Colonic mucosa (tissue), 4 donors: ENCODE measurements at regions of chr10 and their contacts with region 1.

Region 1: GRCh38 chr10:128069351-128070051 is 56.7 kb downstream of the MKI67 start:
- DNase-seq: peak; percentile 64
- H3K4me3 ChIP-seq: no peak overlapping the region
- H3K27ac ChIP-seq: no peak overlapping the region
- H3K4me1 ChIP-seq: no peaks in the 10 kb centered on the region
- H3K27me3 ChIP-seq: no peaks in the 10 kb centered on the region
- CTCF ChIP-seq: peak; percentile 71

Region 2: DNA sequence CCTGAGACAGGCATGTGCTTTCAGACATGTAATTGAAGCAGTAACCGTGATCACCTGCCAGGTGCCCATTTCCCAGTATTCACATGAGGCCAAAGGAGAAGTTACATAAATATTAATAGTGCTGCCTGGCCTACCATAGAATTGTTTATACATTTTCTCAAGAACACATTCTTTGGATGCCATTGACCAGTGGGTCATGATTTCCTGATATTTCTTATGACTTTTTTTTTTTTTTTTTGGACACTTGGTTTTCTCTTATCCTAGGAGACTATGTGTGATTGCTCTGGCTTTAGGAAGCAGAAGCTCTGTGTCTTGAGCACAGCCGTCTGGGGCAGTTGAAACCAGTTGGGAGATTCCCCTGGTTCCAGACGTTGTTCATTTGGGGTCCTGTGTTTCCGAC is 664.3 kb before region 1 on chr10:
- intact Hi-C with region 1: no loop called
- DNase-seq: no peak
- H3K4me3 ChIP-seq: no peak overlapping the region
- H3K27ac ChIP-seq: no peak overlapping the region
- H3K4me1 ChIP-seq: no peaks in the 10 kb centered on the region
- H3K27me3 ChIP-seq: no peaks in the 10 kb centered on the region
- CTCF ChIP-seq: no peak

Region 3: DNA sequence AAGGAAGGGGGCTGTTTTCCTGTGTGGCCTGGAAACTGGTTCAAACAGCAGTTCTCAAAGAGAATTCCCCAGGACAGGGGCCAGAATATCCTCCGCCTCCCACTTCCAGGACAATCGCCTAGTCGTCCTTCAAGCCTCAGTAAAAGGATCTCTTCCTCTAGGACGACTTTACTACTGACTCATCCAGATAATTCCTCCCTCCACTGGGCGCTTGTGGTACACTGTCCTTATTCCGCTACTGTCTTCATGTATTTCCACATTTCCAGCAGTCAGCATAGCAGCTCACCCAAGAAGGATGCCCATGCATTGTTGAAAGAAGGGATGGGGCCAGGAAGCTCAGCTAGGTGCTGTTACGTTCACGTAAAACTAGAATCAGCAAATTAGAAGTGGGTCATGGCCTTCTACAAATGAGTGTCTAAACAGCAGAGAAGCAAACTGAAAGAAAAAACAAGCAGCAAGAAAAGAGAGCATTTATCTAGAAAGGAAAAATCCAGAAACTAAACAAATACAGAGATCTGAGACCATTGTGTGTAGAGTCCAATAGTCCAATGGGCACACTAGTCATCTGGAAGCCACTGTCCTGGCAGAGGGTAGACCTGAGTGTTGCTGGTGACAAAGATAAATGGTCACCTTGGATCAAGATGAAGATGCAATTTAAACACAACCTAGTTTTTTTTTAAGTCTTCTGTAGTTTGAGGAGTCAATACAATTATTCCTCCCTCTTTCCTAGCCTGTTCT is 203.1 kb before region 1 on chr10:
- intact Hi-C with region 1: loop called (anchors 5 kb)
- DNase-seq: no peak
- H3K4me3 ChIP-seq: no peak overlapping the region
- H3K27ac ChIP-seq: no peak overlapping the region
- H3K4me1 ChIP-seq: no peaks in the 10 kb centered on the region
- H3K27me3 ChIP-seq: no peaks in the 10 kb centered on the region
- CTCF ChIP-seq: no peak

Region 4: DNA sequence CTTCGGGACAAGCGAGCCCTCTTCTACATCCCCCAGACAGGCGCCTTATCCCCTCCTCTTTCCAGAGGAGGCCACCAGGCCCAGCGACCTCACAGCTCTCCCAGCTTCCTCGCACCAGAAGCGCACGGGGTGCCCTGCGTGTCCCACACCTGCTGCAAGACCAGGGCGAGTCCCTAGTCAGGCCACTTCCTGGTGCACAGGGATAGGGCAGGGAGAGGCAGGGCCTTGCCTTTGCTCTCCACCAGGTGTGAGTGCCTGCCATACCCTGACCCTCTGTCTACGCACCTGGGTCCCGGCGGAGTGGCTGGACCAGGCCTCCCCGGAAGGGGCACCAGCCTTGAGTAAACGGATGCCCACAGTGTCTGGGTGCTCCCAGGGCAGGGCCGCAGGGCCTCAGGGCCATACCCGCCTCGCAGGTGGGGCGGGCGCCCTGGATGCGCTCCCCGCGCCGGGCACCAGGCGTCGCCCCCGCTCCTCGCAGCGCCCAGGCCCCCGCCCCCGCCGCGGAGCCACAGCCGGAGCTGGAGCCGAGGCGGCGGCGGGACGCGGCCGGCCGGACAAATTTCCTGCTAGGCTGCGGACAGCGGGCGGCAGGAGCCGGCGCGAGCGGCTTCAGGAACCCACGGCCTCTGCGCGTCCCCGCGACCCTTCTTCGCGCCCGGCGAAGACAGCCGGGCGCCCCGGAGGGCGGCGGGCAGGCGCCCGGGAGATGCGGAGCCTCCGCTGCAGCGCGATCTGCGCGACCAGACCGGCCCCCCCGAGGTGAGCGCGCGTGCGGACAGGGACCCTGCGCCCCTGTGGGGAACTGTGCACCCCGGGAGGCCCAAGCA is 162.7 kb before region 1 on chr10 and contains the start of gene PTPRE:
- intact Hi-C with region 1: loop called (anchors 5 kb)
- DNase-seq: peak; percentile 79
- H3K4me3 ChIP-seq: peak within 1 kb of the TSS; percentile 75
- H3K27ac ChIP-seq: peak within 1 kb of the TSS; percentile 85
- H3K4me1 ChIP-seq: peaks cover 8% of the 10 kb centered on the region
- H3K27me3 ChIP-seq: no peaks in the 10 kb centered on the region
- CTCF ChIP-seq: peak; percentile 57
- total RNA-seq, gene PTPRE: 15.9 to 18.8 TPM

Region 5: DNA sequence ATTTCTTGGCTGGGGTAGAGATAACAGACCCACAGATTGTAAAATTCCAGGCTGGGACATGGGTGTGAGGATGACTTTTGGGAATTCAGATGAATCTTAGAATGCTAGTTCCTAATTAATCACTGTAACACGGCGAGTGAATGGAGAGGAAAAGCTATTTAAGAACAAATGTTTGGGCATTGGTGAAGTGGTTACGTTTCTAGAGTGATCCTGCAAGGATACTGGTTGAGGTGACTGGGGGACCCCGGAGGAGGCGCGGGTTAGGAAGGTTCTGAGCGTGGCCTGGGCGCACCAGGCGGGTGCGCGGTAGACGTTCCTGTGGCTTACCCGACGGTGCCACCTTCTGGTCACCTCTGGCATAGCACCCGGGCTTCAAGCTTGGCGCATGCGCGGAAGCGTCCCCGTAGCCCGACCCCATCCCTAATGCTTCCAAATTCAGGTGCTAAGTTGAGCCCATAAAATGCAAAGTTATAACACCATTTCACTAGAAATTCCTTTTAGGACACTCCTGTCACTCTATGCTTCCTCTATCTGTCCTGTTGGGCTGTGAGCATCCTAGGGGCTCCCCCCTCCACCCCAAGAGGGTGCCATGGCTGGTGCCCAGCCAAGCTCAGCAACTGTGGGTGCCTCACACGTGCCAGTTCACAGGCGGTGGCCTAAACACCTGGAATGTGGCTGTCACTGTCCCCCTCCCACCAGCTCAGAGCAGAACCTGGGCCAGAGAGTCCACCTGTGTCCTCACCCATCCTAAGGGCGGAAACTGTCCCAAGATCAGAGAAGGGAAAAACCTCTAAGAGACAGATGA is 58.1 kb before region 1 on chr10:
- intact Hi-C with region 1: loop called (anchors 10 kb)
- DNase-seq: peak; percentile 86
- H3K4me3 ChIP-seq: no peak overlapping the region
- H3K27ac ChIP-seq: no peak overlapping the region
- H3K4me1 ChIP-seq: no peaks in the 10 kb centered on the region
- H3K27me3 ChIP-seq: no peaks in the 10 kb centered on the region
- CTCF ChIP-seq: peak; percentile 99